OCI-LY7 (cell line): ENCODE measurements at regions of chr10 and their contacts with region 1.

Region 1: GRCh38 chr10:93515071-93516005 is 18.9 kb downstream of the CEP55 start:
- DNase-seq: no peak
- H3K4me3 ChIP-seq: no peak overlapping the region
- H3K27ac ChIP-seq: no peak overlapping the region
- H3K4me1 ChIP-seq: no peaks in the 10 kb centered on the region
- CTCF ChIP-seq: no peak

Region 2: DNA sequence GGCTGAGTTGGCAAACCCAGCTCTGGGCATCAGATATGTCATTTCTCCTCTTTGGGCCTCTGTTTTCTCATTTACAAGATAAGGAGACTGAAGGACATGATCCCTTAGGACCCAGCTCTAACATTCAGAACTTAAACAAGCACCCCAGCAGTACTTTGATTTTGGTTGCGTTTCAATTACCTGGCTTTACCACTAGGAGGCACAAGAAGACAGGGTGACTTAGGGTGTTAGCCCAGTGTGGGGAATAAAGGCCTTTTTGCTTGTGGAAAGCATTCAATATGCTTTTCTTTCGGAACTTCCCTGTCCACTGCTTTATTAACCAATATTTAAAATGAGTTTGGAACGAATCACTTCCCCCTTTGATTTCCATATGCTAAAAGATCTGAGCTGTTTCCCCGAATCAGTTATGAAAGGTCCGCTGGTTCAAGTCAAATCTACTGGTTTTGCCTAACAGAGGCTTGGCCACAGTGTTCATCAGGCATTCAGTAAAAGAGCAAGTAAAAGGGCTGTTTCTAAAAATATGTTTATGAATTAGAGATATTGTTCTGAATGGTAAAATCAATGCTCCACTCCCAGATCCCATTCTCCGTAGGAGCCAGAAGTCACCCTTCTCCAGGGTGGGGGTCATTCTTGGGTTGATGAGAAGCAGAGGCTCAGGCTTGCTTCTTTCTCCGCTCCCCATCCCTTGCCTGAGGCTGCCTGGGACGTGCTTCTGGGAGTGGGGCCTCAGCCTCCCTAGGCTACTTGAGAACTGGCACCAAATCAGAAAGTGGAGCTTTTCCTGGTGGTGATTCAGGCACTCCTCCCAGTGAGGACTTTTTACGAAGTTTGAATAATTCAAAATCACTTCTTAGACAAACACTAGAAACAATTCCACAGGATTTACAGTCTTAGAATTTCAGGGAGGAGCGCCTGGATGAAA is 138.7 kb before region 1 on chr10:
- CTCF ChIA-PET with region 1: no interaction called
- POLR2A ChIA-PET with region 1: no interaction called
- intact Hi-C with region 1: loop called (anchors 1 kb)
- DNase-seq: peak; percentile 69
- H3K4me3 ChIP-seq: no peak overlapping the region
- H3K27ac ChIP-seq: no peak overlapping the region
- H3K4me1 ChIP-seq: no peaks in the 10 kb centered on the region
- CTCF ChIP-seq: peak; percentile 95

Region 3: DNA sequence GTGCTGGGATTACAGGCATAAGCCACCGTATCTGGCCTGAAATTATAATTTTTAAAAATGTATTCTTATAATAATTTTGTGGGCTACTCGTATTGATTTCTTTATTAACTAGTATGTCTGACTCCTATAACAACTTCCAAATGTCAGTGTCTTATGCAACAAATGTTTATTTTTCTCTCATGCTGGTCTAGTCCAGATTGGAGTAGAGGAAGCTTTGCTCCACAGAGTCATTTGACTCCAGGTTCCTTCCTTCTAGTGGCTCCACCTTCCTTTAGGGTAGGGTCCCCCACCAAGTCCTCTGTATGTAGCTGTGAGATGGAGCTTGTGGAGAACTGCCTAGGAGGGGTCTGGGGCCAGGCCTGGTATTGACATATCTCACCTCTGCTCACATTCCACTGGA is 10.3 kb before region 1 on chr10:
- CTCF ChIA-PET with region 1: no interaction called
- POLR2A ChIA-PET with region 1: interaction called, 14 read pairs
- intact Hi-C with region 1: no loop called
- DNase-seq: no peak
- H3K4me3 ChIP-seq: no peak overlapping the region
- H3K27ac ChIP-seq: no peak overlapping the region
- H3K4me1 ChIP-seq: peaks cover 8% of the 10 kb centered on the region
- CTCF ChIP-seq: no peak

Region 4: DNA sequence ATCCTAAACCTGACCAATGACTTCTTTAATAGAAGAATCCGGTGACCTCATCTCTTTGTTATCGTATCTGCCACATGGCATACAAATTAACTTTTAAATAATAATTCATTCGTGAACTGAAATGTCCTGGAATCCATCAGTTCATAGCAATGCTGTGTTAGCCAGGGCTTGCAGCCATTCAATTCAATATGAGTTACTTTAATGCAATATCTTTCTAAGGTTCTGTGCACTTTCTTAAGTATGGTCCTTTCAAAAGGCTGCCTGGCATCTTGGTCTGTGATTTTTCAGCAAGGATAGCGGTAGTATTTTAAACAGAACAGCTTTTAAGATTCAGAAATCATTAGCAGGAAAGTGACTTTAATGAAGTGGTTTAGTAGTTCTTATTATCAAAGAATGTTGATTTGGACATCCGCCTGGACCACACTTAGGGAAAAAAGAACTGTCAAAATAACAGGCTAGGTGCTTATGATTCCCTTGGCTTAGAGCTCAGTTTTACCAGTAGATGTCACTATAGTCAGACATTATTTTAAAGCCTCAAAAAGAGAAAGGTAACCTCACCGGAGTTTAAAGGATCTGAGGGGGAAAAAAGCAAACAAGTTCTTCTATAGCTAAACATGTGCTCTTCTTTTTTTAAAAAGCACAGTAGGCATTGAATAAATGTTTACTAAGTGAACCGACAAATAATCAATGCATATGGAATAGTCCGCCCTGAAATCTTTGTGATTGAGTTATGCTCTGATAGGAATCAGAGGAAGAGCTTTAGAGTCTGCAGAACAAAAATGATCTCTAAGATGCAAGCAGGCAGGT is 401.1 kb after region 1 on chr10:
- CTCF ChIA-PET with region 1: no interaction called
- POLR2A ChIA-PET with region 1: no interaction called
- intact Hi-C with region 1: no loop called
- DNase-seq: peak; percentile 11
- H3K4me3 ChIP-seq: no peak overlapping the region
- H3K27ac ChIP-seq: no peak overlapping the region
- H3K4me1 ChIP-seq: no peaks in the 10 kb centered on the region
- CTCF ChIP-seq: peak; percentile 77